CD8-positive, alpha-beta T cell (primary cell): ENCODE measurements at regions of chr12 and their contacts with region 1.

Region 1: GRCh38 chr12:48165094-48165981 is 8.0 kb upstream of the ASB8 start:
- DNase-seq: peak in 7 of 9 experiments; percentile 34 to 85 (median 56)
- ATAC-seq: peak; percentile 90
- H3K4me3 ChIP-seq: no peak overlapping the region
- H3K4me3 Mint-ChIP-seq: no peak overlapping the region
- H3K27ac ChIP-seq: no peak overlapping the region
- H3K27ac Mint-ChIP-seq: no peak overlapping the region
- H3K4me1 ChIP-seq: no peaks in the 10 kb centered on the region
- H3K4me1 Mint-ChIP-seq: peaks cover 6% of the 10 kb centered on the region
- H3K27me3 ChIP-seq: no peaks in the 10 kb centered on the region
- H3K27me3 Mint-ChIP-seq: peaks cover 10% of the 10 kb centered on the region
- CTCF ChIP-seq: peak; percentile 98

Region 2: GRCh38 chr12:46858368-46858767 is 1307.0 kb before region 1 on chr12:
- CTCF ChIA-PET with region 1: no interaction called
- POLR2A ChIA-PET with region 1: no interaction called
- intact Hi-C with region 1: no loop called
- DNase-seq: no peak
- ATAC-seq: no peak
- H3K4me3 ChIP-seq: no peak overlapping the region
- H3K4me3 Mint-ChIP-seq: no peak overlapping the region
- H3K27ac ChIP-seq: no peak overlapping the region
- H3K27ac Mint-ChIP-seq: no peak overlapping the region
- H3K4me1 ChIP-seq: no peaks in the 10 kb centered on the region
- H3K4me1 Mint-ChIP-seq: no peaks in the 10 kb centered on the region
- H3K27me3 ChIP-seq: no peaks in the 10 kb centered on the region
- H3K27me3 Mint-ChIP-seq: no peaks in the 10 kb centered on the region
- CTCF ChIP-seq: no peak

Region 3: GRCh38 chr12:47941851-47942601 is 223.3 kb before region 1 on chr12:
- CTCF ChIA-PET with region 1: interaction called, 4 read pairs
- POLR2A ChIA-PET with region 1: no interaction called
- intact Hi-C with region 1: loop called in 1 of 2 experiments (anchors 1 kb)
- DNase-seq: peak in 8 of 9 experiments; percentile 25 to 68 (median 59)
- ATAC-seq: peak; percentile 74
- H3K4me3 ChIP-seq: no peak overlapping the region
- H3K4me3 Mint-ChIP-seq: no peak overlapping the region
- H3K27ac ChIP-seq: no peak overlapping the region
- H3K27ac Mint-ChIP-seq: no peak overlapping the region
- H3K4me1 ChIP-seq: no peaks in the 10 kb centered on the region
- H3K4me1 Mint-ChIP-seq: peaks cover 7% of the 10 kb centered on the region
- H3K27me3 ChIP-seq: peaks cover 0 to 10% of the 10 kb centered on the region in 2 experiments
- H3K27me3 Mint-ChIP-seq: peaks cover 30% of the 10 kb centered on the region
- CTCF ChIP-seq: peak; percentile 53

Region 4: DNA sequence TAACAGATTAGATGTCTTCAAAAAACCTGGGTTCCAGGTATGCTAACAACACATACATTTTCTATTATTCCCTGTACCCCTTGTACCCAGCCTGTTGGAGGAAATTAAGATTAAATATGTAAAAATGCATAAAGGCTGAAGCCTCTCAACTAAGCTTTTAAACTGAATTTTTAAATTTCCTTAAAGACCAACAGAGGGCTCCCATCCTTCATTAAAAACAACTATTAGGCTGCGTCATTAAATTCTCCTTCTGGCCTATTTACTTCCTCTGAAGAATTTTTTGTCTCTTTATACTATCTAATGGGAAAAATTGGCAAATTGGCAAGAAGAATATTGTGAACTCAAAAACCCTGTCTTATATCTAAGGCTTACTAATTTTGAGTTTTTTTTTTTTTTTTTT is 81.3 kb before region 1 on chr12:
- CTCF ChIA-PET with region 1: interaction called, 5 read pairs
- POLR2A ChIA-PET with region 1: no interaction called
- intact Hi-C with region 1: loop called (anchors 1 kb)
- DNase-seq: peak in 2 of 9 experiments; percentile 13 to 33
- ATAC-seq: no peak
- H3K4me3 ChIP-seq: no peak overlapping the region
- H3K4me3 Mint-ChIP-seq: no peak overlapping the region
- H3K27ac ChIP-seq: no peak overlapping the region
- H3K27ac Mint-ChIP-seq: no peak overlapping the region
- H3K4me1 ChIP-seq: no peaks in the 10 kb centered on the region
- H3K4me1 Mint-ChIP-seq: no peaks in the 10 kb centered on the region
- H3K27me3 ChIP-seq: no peaks in the 10 kb centered on the region
- H3K27me3 Mint-ChIP-seq: no peaks in the 10 kb centered on the region
- CTCF ChIP-seq: no peak

Region 5: GRCh38 chr12:48175613-48176416 is 10.5 kb after region 1 on chr12:
- CTCF ChIA-PET with region 1: interaction called, 10 read pairs
- POLR2A ChIA-PET with region 1: no interaction called
- intact Hi-C with region 1: no loop called
- DNase-seq: no peak
- ATAC-seq: no peak
- H3K4me3 ChIP-seq: no peak overlapping the region
- H3K4me3 Mint-ChIP-seq: peak overlapping the region; percentile 24
- H3K27ac ChIP-seq: no peak overlapping the region
- H3K27ac Mint-ChIP-seq: no peak overlapping the region
- H3K4me1 ChIP-seq: no peaks in the 10 kb centered on the region
- H3K4me1 Mint-ChIP-seq: peaks cover 8% of the 10 kb centered on the region
- H3K27me3 ChIP-seq: no peaks in the 10 kb centered on the region
- H3K27me3 Mint-ChIP-seq: peaks cover 16% of the 10 kb centered on the region
- CTCF ChIP-seq: no peak

Region 6: DNA sequence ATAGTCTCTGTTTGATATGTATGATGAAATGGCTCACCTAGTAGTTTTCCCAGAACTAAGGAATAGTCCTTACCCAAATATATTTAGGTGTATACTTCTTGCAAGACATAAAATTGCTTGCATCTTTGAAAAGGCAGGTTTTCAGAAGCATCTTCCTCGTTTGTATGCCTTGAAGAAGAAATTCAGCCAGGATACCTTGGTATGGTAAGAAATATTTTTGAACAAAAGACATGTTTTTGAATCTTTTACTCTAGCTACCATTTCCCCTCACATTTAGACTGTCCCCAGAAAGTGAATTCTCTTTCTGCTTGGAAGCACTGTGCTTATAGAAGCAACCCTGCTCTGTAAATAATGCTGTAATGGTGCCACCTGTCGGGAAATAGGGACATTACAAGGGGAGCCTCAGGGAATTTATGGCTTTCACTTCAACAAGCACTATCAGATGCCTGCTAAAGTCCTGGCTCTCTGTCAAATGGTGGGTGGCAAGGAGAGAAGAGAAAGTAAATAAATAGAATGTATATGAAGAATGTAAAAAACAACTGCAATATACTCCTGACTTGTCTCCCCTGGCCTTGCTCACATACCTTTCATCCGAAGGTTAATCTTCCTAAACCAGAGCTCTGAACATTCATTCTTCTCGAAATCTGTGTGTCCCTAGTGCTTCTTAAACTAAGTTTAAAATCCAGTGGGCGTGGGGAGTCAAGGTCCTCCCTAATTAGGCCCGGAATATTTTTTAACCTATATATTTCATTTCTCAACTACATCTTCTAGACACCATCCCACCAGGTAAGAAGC is 24.2 kb after region 1 on chr12:
- CTCF ChIA-PET with region 1: interaction called, 23 read pairs
- POLR2A ChIA-PET with region 1: no interaction called
- intact Hi-C with region 1: no loop called
- DNase-seq: peak; percentile 43 to 80 (median 71)
- ATAC-seq: peak; percentile 94
- H3K4me3 ChIP-seq: no peak overlapping the region
- H3K4me3 Mint-ChIP-seq: no peak overlapping the region
- H3K27ac ChIP-seq: no peak overlapping the region
- H3K27ac Mint-ChIP-seq: no peak overlapping the region
- H3K4me1 ChIP-seq: peaks cover under 1% of the 10 kb centered on the region
- H3K4me1 Mint-ChIP-seq: peaks cover 2% of the 10 kb centered on the region
- H3K27me3 ChIP-seq: peaks cover 2 to 5% of the 10 kb centered on the region in 2 experiments
- H3K27me3 Mint-ChIP-seq: peaks cover 30% of the 10 kb centered on the region
- CTCF ChIP-seq: peak; percentile 88

Region 7: DNA sequence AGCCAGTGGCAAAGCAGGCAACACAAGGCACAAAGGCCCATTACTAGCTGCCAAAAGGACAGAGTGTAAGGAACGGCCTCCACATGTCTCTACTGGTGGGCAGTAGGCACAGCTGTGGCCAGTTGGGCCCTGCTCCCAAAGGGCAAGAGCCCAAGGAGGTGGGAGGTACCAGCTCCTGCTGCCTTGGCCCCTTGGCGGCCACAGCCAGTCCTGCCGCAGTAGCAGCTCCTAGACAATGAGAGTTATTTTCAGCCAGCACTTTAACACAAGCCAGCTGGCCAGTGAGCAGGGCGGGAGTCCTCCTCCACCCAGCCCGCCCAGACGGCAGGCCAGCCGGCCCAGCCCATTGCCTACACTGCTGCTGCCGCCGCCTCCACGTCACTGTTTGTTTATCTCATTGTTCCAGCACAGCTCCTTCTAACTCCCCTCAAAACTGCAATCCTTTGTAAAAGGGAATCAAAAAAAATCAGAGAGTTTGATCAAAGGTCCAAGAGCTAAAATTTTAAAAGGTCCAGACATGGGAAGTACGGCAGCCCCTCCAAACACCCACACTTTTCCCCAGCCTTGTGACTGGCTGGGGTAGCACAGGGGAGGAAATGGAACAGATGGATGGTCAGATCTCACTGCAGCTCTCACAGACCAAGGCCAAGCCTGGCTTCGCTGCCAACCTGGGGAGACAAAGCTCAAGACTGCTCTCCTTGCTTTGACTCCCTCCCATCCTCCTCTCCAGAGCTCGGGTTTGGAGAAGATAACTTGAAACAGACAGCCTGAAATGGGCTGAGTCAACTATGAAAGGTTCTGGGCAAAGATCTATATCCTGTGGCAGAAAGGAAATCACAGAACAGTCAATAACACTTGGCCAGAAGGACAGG is 1508.3 kb after region 1 on chr12:
- CTCF ChIA-PET with region 1: no interaction called
- POLR2A ChIA-PET with region 1: no interaction called
- intact Hi-C with region 1: no loop called
- DNase-seq: peak in 3 of 9 experiments; percentile 18 to 30 (median 26)
- ATAC-seq: no peak
- H3K4me3 ChIP-seq: no peak overlapping the region
- H3K4me3 Mint-ChIP-seq: peak overlapping the region; percentile 26
- H3K27ac ChIP-seq: peak overlapping the region in 1 of 2 experiments; percentile 92
- H3K27ac Mint-ChIP-seq: peak overlapping the region; percentile 98
- H3K4me1 ChIP-seq: peaks cover 66% of the 10 kb centered on the region
- H3K4me1 Mint-ChIP-seq: peaks cover 84% of the 10 kb centered on the region
- H3K27me3 ChIP-seq: no peaks in the 10 kb centered on the region
- H3K27me3 Mint-ChIP-seq: no peaks in the 10 kb centered on the region
- CTCF ChIP-seq: no peak